Ovary (tissue), 10 donors: ENCODE measurements at regions of chr1 and their contacts with region 1.

Region 1: GRCh38 chr1:67489643-67490042 is 59.4 kb upstream of the SERBP1 start:
- DNase-seq: no peak
- H3K4me3 ChIP-seq: no peak overlapping the region
- H3K27ac ChIP-seq: no peak overlapping the region
- H3K4me1 ChIP-seq: no peaks in the 10 kb centered on the region
- H3K27me3 ChIP-seq: no peaks in the 10 kb centered on the region
- CTCF ChIP-seq: no peak
- EP300 ChIP-seq: no peak
- POLR2A ChIP-seq: no peak

Region 2: GRCh38 chr1:67214420-67215174 is 275.0 kb before region 1 on chr1:
- intact Hi-C with region 1: loop called in 1 of 4 experiments (anchors 10 kb)
- DNase-seq: no peak
- H3K4me3 ChIP-seq: no peak overlapping the region
- H3K27ac ChIP-seq: no peak overlapping the region
- H3K4me1 ChIP-seq: no peaks in the 10 kb centered on the region
- H3K27me3 ChIP-seq: no peaks in the 10 kb centered on the region
- CTCF ChIP-seq: no peak
- EP300 ChIP-seq: no peak
- POLR2A ChIP-seq: no peak

Region 3: DNA sequence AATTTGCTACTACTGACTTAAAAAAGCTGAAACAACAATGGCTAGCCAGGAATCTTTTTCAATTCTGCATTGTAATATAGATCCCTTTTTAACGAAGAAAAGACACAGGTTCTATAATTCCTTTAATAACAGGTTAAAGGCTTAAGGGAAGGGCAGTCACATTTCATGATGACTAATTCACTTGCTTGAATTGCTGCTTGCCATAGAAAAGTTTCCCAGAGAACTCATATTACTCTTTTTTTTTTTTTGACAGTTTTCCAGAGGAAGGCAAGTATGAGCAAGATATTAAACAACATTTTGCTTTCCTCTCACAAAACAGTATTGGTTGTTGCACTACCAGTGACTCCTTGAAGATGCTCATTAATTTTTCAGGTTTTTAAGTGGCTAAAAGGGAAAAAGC is 262.4 kb before region 1 on chr1:
- intact Hi-C with region 1: loop called in 1 of 4 experiments (anchors 10 kb)
- DNase-seq: no peak
- H3K4me3 ChIP-seq: no peak overlapping the region
- H3K27ac ChIP-seq: no peak overlapping the region
- H3K4me1 ChIP-seq: no peaks in the 10 kb centered on the region
- H3K27me3 ChIP-seq: no peaks in the 10 kb centered on the region
- CTCF ChIP-seq: no peak
- EP300 ChIP-seq: no peak
- POLR2A ChIP-seq: no peak